Right cardiac atrium (tissue), 5 donors: ENCODE measurements at regions of chr9 and their contacts with region 1.

Region 1: GRCh38 chr9:95055851-95056551 is 261.5 kb downstream of the FANCC start:
- DNase-seq: peak in 1 of 3 donors; percentile 63
- ATAC-seq: peak; percentile 60 to 73
- H3K4me3 ChIP-seq: peak overlapping the region; percentile 36
- H3K27ac ChIP-seq: peak overlapping the region; percentile 83
- H3K4me1 ChIP-seq: peaks cover 23% of the 10 kb centered on the region
- H3K27me3 ChIP-seq: no peaks in the 10 kb centered on the region

Region 2: GRCh38 chr9:95073021-95073607 is 17.1 kb after region 1 on chr9:
- intact Hi-C with region 1: loop called in 1 of 4 experiments (anchors 2 kb)
- DNase-seq: no peak
- ATAC-seq: peak in 1 of 2 donors; percentile 15
- H3K4me3 ChIP-seq: no peak overlapping the region
- H3K27ac ChIP-seq: peak overlapping the region; percentile 35
- H3K4me1 ChIP-seq: peaks cover 28% of the 10 kb centered on the region
- H3K27me3 ChIP-seq: no peaks in the 10 kb centered on the region

Region 3: DNA sequence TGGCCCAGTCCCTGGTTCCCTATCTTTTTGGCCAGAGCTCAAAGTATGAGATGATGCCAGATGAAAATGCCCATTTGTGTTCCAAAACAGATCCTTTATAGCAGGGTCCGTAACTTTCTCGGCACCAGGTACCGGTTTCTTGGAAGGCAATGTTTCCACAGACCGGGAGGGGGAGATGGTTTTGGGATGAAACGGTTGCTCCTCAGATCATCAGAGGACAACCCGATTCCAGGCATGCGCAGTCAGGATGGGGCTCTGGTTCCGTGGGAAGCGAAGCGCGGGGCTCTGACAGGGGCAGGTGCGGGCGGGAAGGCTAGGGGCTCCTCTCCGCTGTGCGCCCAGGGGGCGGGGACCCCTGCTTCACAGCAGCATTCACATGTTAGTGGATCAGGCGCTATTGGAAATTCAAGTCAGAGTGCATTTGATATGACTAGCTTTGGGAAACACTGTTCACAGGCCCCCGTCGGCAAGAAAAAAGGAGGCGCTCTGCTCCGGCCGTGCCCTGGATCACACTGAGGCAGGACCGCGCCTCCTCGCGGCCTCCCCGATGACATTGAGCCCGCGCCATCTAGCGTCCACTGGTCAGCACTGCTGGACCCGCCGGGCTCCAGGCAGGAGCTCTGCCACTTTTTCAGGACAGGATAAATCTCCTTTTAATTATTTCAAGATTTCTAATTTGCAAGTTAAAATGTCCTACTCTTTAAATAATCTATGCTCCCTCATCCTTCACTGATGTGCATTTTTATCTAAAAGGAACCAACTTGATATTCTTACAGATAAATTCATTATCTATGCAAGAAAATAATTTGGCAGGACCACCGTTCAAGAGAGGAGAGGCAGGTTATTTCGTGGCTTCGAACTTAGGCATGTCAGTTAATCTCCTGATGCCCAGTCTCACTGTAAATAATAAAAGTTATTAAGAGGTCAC is 71.5 kb after region 1 on chr9:
- intact Hi-C with region 1: no loop called
- DNase-seq: peak; percentile 90 to 97 (median 94)
- ATAC-seq: peak; percentile 87 to 92
- H3K4me3 ChIP-seq: peak overlapping the region; percentile 34
- H3K27ac ChIP-seq: no peak overlapping the region
- H3K4me1 ChIP-seq: no peaks in the 10 kb centered on the region
- H3K27me3 ChIP-seq: no peaks in the 10 kb centered on the region

Region 4: DNA sequence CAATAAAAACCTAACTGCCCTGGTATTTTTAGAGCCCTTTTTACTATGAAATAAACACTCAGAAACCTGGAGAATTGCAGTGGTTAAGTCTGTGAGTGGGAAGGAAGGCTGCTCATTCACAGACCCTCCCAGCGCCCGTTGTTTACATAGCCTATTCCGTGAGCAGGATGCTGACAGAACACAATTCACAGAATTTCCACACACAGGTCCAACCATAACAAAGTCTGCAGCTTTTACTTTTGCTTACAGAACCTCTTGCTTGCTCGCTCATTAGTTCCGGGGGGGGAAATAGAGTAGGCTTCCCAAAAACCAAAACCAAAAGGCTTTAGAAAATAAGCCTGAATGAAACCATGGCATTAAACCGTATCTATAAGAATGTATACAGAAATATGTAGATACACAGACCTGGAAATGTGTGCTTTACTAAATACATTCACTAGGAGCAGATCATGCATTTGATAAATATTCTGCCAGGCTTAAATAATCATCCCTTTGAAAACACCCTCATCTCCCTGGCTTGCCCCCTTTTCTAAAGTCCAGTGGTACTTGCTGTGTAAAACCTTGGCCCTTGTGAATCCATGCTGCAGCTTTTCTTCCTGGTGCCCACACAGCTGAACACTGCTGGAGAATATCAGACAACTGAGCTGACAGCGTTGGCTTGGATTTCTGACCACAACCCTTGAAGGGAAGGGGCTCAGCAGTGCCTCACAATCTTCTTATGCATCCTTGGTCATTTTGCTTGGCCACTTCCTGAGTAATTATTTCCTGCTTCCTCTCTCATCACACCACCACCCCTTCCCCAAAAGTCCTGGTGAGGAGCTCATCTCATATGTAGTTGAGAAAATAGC is 133.5 kb after region 1 on chr9:
- intact Hi-C with region 1: no loop called
- DNase-seq: peak in 2 of 3 donors; percentile 59 to 74
- ATAC-seq: peak; percentile 90 to 96
- H3K4me3 ChIP-seq: no peak overlapping the region
- H3K27ac ChIP-seq: peak overlapping the region; percentile 72
- H3K4me1 ChIP-seq: peaks cover 6% of the 10 kb centered on the region
- H3K27me3 ChIP-seq: no peaks in the 10 kb centered on the region